H1 (cell line): ENCODE measurements at regions of chr22 and their contacts with region 1.

Region 1: DNA sequence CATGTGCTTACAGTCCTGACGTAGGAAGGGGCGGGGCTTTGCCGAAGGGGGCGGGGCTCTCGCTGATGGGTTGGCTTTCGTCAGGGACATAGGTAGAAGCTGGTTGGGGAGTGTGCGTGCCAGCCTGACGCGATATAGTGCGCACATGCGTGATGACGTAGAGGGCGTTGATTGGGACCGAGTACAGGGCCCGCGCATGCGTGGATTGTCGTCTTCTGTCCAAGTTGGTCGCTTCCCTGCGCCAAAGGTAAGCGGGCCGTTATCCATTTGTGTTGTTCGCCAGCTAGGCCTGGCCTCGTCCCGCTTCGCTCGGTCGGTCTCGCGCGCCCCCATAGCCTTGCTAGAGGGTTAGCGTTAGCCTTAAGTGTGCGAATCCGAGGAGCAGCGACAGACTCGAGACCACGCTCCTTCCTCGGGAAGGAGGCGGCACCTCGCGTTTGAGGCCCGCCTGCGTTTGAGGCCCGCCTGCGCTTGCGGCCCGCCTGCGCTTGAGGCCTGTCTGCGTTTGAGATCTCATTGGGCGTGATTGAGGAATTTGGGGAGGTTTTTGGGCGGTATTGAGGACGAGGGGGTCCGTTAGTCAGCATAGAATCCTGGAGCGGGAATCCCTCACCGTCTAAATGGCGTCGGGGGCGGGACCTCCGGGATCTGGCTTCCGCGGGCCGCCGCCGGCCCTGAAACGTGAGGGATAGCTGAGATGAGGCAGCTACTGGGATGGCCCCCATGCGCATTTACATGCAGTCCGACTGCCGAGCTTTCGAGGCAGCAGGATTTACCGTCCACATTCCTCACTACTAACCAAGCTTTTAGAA is at the start of gene XRCC6:
- DNase-seq: peak; percentile 100
- H3K4me3 ChIP-seq: peak within 1 kb of the TSS; percentile 78 to 98 (median 96)
- H3K27ac ChIP-seq: peak within 1 kb of the TSS; percentile 98
- H3K4me1 ChIP-seq: peaks cover 0 to 11% (median 4%) of the 10 kb centered on the region in 4 experiments; a peak in 5 of 7 replicates
- H3K27me3 ChIP-seq: no peaks in the 10 kb centered on the region
- CTCF ChIP-seq: no peak
- EP300 ChIP-seq: 0 out of 3 replicates have a peak, but pooled peaks of 1 of the 2 experiments have one; percentile 7
- POLR2A ChIP-seq: peak; percentile 91 to 95
- RAD21 ChIP-seq: no peak
- total RNA-seq, gene XRCC6: 488 and 490 TPM in 2 replicates

Region 2: GRCh38 chr22:41603873-41604332 is 17.4 kb before region 1 on chr22:
- CTCF ChIA-PET with region 1: interaction called, 3 read pairs
- POLR2A ChIA-PET with region 1: interaction called, 25 read pairs
- DNase-seq: no peak
- H3K4me3 ChIP-seq: no peak overlapping the region
- H3K27ac ChIP-seq: no peak overlapping the region
- H3K4me1 ChIP-seq: no peaks in the 10 kb centered on the region
- H3K27me3 ChIP-seq: no peaks in the 10 kb centered on the region
- CTCF ChIP-seq: no peak
- EP300 ChIP-seq: no peak
- POLR2A ChIP-seq: no peak
- RAD21 ChIP-seq: no peak

Region 3: DNA sequence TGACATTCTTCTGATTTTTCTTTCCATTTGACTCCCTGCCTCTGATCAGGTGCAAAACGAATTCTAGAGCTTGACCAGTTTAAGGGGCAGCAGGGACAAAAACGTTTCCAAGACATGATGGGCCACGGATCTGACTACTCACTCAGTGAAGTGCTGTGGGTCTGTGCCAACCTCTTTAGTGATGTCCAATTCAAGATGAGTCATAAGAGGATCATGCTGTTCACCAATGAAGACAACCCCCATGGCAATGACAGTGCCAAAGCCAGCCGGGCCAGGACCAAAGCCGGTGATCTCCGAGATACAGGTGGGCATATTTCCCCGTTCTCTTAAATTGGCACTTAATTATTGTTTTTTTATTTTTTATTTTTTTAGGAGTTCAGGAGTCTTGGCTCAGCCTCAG is 15.2 kb after region 1 on chr22:
- CTCF ChIA-PET with region 1: interaction called, 4 read pairs
- POLR2A ChIA-PET with region 1: interaction called, 157 read pairs
- DNase-seq: no peak
- H3K4me3 ChIP-seq: no peak overlapping the region
- H3K27ac ChIP-seq: no peak overlapping the region
- H3K4me1 ChIP-seq: no peaks in the 10 kb centered on the region
- H3K27me3 ChIP-seq: no peaks in the 10 kb centered on the region
- CTCF ChIP-seq: no peak
- EP300 ChIP-seq: no peak
- POLR2A ChIP-seq: no peak
- RAD21 ChIP-seq: no peak

Region 4: DNA sequence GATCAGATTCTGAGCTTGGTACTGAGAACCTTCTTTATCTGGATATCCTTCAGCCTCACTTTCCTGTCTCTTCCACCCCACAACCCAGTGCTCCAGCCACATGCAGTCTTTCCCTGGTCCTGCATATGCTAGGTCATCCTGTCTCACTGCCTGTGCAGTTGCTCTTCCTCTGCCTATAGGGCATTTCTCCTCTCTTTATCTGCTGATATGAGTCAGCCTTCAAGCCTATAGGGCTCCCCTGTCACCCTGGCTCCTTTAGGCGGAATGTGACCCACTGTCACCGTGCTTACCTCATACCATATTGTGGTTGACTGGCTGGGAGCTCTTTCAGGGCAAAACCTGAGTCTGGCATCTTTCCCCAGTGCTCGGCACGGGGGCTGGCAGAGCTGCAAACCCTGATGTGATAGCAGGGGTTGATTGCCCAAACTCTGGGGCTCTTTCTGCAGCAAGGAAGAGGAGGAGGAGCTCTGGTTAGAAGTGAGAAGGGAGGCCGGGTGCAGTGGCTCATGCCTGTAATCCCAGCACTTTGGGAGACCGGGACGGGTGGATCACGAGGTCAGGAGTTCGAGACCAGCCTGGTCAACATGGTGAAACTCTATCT is 104.3 kb after region 1 on chr22:
- CTCF ChIA-PET with region 1: no interaction called
- POLR2A ChIA-PET with region 1: no interaction called
- DNase-seq: no peak
- H3K4me3 ChIP-seq: no peak overlapping the region
- H3K27ac ChIP-seq: no peak overlapping the region
- H3K4me1 ChIP-seq: no peaks in the 10 kb centered on the region
- H3K27me3 ChIP-seq: no peaks in the 10 kb centered on the region
- CTCF ChIP-seq: no peak
- EP300 ChIP-seq: no peak
- POLR2A ChIP-seq: no peak
- RAD21 ChIP-seq: no peak